ENCODE measurements at regions of chr4 and their contacts with region 1.

Region 1: GRCh38 chr4:163554870-163555465 is 60.5 kb downstream of the TMA16 start:
- DNase-seq: no peak
- H3K4me3 ChIP-seq: no peak overlapping the region
- H3K27ac ChIP-seq: no peak overlapping the region
- H3K4me1 ChIP-seq: peaks cover 0 to 6% (median 2%) of the 10 kb centered on the region in 4 donors
- H3K27me3 ChIP-seq: no peaks in the 10 kb centered on the region
- CTCF ChIP-seq: peak; percentile 52 to 64

Region 2: DNA sequence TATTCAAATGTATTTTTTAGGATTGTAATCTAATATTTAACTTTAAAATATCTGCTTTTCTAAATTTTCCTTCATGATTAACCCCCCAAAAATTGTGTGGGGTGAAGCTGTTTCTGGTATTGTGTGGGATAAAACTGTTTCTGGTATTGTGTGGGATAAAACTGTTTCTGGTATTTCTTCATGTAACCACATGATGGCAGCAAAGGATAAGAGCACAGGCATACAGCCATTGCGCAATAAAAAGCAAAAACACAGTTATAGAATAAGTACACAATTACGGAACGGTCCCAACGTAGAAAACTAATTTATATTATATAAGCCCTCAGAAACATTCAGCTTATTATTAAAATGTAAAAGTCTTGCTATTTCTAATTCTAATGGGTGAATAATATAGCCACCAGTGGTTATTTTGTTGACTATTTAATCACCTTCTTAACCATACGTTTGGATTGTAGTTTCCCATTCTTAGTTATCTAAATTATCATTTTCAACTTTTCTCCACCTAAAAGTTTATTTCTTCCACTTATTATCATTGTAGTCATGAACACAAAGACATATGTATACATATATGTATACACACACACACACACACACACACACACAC is 1057.3 kb before region 1 on chr4:
- intact Hi-C with region 1: loop called (anchors 5 kb)
- DNase-seq: no peak
- H3K4me3 ChIP-seq: peak overlapping the region; percentile 24 to 34
- H3K27ac ChIP-seq: no peak overlapping the region
- H3K4me1 ChIP-seq: peaks cover 0 to 4% (median 0%) of the 10 kb centered on the region in 4 donors
- H3K27me3 ChIP-seq: no peaks in the 10 kb centered on the region
- CTCF ChIP-seq: peak; percentile 89 to 91

Region 3: DNA sequence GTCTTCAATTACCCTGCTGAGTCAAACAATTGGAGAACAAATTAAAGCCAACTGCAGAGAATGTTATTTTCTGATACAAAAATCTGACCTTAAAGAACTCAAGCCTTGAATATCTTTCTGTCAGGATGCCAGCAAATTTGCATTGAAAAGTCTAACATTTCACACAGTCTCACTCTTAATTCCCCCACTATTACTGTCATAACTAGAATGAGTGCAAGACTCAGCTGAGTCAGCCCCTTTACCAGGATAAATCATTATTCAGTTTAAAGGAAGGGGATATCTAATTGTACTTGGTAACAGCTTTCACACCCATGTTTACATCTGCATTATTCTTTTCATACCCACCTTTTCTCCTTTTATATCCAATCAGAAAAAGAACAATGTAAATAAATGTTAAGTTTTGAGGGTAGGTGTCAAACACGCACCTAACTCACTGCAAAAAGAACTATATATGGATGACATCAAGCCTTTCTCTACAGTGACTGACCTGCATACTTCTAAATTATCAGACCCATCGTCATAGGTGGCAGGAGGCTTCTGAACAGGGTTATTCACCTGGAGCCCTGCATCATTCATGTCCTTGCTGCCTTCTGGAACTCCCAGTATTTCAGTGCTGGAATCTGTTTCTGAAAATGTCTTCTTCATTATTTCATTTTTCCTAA is 56.9 kb after region 1 on chr4:
- intact Hi-C with region 1: no loop called
- DNase-seq: no peak
- H3K4me3 ChIP-seq: peak overlapping the region; percentile 19 to 20
- H3K27ac ChIP-seq: no peak overlapping the region
- H3K4me1 ChIP-seq: no peaks in the 10 kb centered on the region
- H3K27me3 ChIP-seq: no peaks in the 10 kb centered on the region
- CTCF ChIP-seq: no peak

Region 4: DNA sequence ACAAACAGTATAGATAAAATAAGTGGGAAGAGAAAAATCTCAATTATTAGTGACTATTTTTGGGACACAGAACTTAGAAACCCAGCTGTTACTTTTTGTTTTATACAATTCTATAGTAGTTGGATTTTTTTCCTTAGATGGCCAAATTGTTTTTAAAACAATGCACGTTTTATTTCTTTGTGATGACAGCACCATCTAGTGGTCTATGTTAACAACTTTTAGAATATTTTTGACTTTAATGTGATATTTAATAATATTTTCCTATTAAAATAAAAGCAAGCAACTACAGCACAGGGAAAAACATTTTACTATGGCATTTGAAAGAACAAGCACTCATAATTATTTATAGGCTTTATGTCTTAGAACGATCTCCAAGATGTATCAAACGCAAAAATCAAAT is 1193.4 kb after region 1 on chr4:
- intact Hi-C with region 1: loop called (anchors 10 kb)
- DNase-seq: no peak
- H3K4me3 ChIP-seq: no peak overlapping the region
- H3K27ac ChIP-seq: no peak overlapping the region
- H3K4me1 ChIP-seq: no peaks in the 10 kb centered on the region
- H3K27me3 ChIP-seq: peaks cover 0 to 4% of the 10 kb centered on the region in 2 donors
- CTCF ChIP-seq: peak; percentile 29 to 32

Measured in tibial artery (tissue), 4 donors.